ENCODE measurements at regions of chr4 and their contacts with region 1.

Region 1: GRCh38 chr4:119683518-119683917 is 54.9 kb upstream of the PDE5A start:
- DNase-seq: no peak
- ATAC-seq: no peak
- H3K4me3 ChIP-seq: no peak overlapping the region
- H3K27ac ChIP-seq: no peak overlapping the region
- H3K4me1 ChIP-seq: no peaks in the 10 kb centered on the region
- H3K27me3 ChIP-seq: no peaks in the 10 kb centered on the region
- CTCF ChIP-seq: no peak
- EP300 ChIP-seq: no peak
- POLR2A ChIP-seq: no peak
- RAD21 ChIP-seq: no peak

Region 2: GRCh38 chr4:119671205-119671604 is 12.3 kb before region 1 on chr4:
- CTCF ChIA-PET with region 1: interaction called, 13 read pairs
- POLR2A ChIA-PET with region 1: no interaction called
- RAD21 ChIA-PET with region 1: no interaction called
- SMC1A ChIA-PET with region 1: interaction called, 12 read pairs
- in situ Hi-C with region 1: no loop called
- intact Hi-C with region 1: no loop called
- DNase-seq: no peak
- ATAC-seq: no peak
- H3K4me3 ChIP-seq: no peak overlapping the region
- H3K27ac ChIP-seq: no peak overlapping the region
- H3K4me1 ChIP-seq: no peaks in the 10 kb centered on the region
- H3K27me3 ChIP-seq: no peaks in the 10 kb centered on the region
- CTCF ChIP-seq: no peak
- EP300 ChIP-seq: no peak
- POLR2A ChIP-seq: no peak
- RAD21 ChIP-seq: no peak

Measured in GM12878 (cell line).